ENCODE measurements at regions of chr12 and their contacts with region 1.

Region 1: DNA sequence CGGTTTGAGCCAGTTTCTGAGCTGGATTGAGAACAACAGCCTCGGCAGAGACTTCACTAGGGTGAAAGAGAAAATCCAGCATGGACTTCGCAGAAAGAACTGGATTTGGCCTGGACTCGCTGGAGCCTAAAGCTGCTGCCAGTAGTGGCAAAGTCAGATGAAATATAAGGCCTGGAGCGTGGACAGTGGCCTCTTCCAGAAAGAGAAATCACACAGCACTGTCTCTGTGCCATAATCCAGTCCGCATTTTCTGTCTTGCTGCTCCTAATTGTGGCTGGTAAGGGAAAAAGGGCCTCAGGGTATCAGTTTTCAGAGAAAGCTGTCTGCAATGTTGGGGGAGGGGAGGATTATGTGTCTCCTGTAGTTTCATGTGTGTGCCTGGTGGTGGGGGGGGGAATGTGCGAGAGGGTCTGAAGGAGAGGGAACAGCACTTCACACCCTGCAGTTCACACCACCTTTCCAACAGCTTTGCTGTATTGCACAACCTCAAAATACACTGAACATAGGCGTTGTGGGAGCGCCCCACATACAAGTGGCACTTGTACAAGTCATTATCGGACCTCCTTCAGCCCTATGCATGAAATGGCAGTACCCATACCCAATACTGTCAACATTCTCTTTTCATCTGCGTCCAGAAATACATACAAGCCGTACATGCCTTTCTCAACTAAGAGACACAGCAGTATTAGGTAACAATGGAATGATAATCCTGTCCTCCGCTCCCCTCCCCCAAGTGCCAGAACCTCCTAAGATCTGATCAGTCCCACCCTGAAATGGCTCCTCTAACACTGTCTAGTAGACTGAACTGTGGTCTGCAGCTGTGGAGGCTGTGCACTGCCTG is 107.5 kb upstream of the ATF7IP start:
- DNase-seq: peak; percentile 97
- ATAC-seq: peak; percentile 69
- H3K4me3 ChIP-seq: no peak overlapping the region
- H3K27ac ChIP-seq: peak overlapping the region; percentile 94
- H3K4me1 ChIP-seq: peaks cover 52% of the 10 kb centered on the region
- H3K27me3 ChIP-seq: no peaks in the 10 kb centered on the region
- CTCF ChIP-seq: no peak

Region 2: GRCh38 chr12:14384783-14385638 is 127.1 kb after region 1 on chr12:
- CTCF ChIA-PET with region 1: no interaction called
- POLR2A ChIA-PET with region 1: no interaction called
- intact Hi-C with region 1: loop called (anchors 5 kb)
- DNase-seq: peak; percentile 68
- ATAC-seq: peak; percentile 29; the same call in 1 of the 2 replicates
- H3K4me3 ChIP-seq: no peak overlapping the region
- H3K27ac ChIP-seq: 0 out of 2 replicates have a peak overlapping the region, but pooled peaks have one; percentile 18
- H3K4me1 ChIP-seq: peaks cover 6% of the 10 kb centered on the region; the same call in 1 of the 2 replicates
- H3K27me3 ChIP-seq: no peaks in the 10 kb centered on the region
- CTCF ChIP-seq: no peak

Region 3: DNA sequence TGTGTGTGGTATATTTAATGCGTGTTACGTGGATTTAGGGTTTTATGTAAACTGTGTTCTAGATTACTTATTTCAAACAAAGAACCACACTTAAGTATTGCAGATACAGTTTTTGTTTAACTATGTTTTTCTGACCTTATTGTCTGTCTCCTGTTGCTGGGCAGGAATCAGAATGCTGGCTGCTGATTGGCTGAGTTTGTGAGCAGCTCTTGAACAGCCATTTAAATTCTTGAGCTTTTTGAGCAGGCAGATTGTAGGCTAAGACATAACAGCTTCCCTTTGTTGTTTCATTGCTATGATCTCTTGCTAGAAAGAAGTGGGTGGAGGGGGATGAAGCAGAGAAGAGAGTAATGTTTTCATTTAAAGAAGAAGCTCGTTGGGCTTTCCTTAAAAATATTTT is 159.8 kb after region 1 on chr12:
- CTCF ChIA-PET with region 1: no interaction called
- POLR2A ChIA-PET with region 1: interaction called, 3 read pairs
- intact Hi-C with region 1: loop called (anchors 1 kb)
- DNase-seq: peak; percentile 54
- ATAC-seq: peak; percentile 50; the same call in 1 of the 2 replicates
- H3K4me3 ChIP-seq: no peak overlapping the region
- H3K27ac ChIP-seq: no peak overlapping the region
- H3K4me1 ChIP-seq: peaks cover 11% of the 10 kb centered on the region; the same call in 1 of the 2 replicates
- H3K27me3 ChIP-seq: no peaks in the 10 kb centered on the region
- CTCF ChIP-seq: no peak

Measured in PC-3 (cell line).